Activated CD4-positive, alpha-beta T cell treated with anti-CD3 and anti-CD28 coated beads for 36 hours (primary cell): ENCODE measurements at regions of chr10 and their contacts with region 1.

Region 1: GRCh38 chr10:14959276-14960057 is at the start of gene MEIG1:
- DNase-seq: peak; percentile 96
- ATAC-seq: peak; percentile 87
- H3K4me3 Mint-ChIP-seq: peak within 1 kb of the TSS; percentile 97
- H3K27ac Mint-ChIP-seq: peak within 1 kb of the TSS; percentile 98
- H3K4me1 Mint-ChIP-seq: peaks cover 26% of the 10 kb centered on the region
- H3K27me3 Mint-ChIP-seq: no peaks in the 10 kb centered on the region
- total RNA-seq, gene MEIG1: 0.81 to 1.1 TPM

Region 2: GRCh38 chr10:14491806-14492205 is 467.7 kb before region 1 on chr10:
- CTCF ChIA-PET with region 1: no interaction called
- POLR2A ChIA-PET with region 1: no interaction called
- intact Hi-C with region 1: loop called in 1 of 2 experiments (anchors 10 kb)
- DNase-seq: no peak
- ATAC-seq: no peak
- H3K4me3 Mint-ChIP-seq: no peak overlapping the region
- H3K27ac Mint-ChIP-seq: peak overlapping the region; percentile 13
- H3K4me1 Mint-ChIP-seq: peaks cover 2% of the 10 kb centered on the region
- H3K27me3 Mint-ChIP-seq: peaks cover 2% of the 10 kb centered on the region

Region 3: DNA sequence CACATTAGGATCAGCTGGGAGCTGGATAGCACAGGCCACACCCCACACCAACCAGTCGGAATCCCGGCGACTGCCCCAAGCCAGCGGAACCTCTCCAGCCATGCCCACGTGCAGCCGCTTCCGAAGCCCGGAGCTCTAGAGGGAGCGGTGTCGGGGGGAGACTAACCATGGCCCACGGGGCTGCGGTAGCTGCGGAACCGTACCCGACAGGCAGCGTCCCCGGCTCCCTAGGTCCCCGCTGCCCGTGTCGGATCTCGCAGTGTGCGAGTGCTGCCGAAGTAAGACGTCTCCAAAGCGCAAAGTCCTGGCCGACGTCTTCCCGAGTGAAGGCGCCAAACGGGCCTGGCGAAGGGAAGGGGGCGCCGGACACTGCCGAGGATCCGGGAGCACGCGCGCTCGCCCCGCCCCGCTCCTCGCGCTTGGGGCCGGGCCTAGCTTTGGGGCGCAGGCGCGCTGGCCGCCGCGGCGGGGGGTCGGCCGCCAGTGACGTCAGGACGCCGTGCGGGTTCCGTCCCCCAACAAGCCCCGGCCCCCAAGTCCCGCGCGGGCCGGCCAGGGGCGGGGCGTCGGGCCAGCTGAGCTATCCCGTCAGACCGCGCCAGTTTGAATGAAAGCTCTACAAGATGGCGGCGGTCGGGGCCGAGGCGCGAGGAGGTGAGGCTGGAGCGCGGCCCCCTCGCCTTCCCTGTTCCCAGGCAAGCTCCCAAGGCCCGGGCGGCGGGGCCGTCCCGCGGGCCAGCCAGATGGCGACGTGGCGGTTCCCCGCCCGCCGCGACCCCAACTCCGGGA is 81.0 kb before region 1 on chr10 and contains the start of gene SUV39H2:
- CTCF ChIA-PET with region 1: interaction called, 3 read pairs
- POLR2A ChIA-PET with region 1: interaction called, 8 read pairs
- intact Hi-C with region 1: loop called (anchors 1 kb)
- DNase-seq: peak; percentile 97
- ATAC-seq: peak; percentile 92
- H3K4me3 Mint-ChIP-seq: peak within 1 kb of the TSS; percentile 97
- H3K27ac Mint-ChIP-seq: peak within 1 kb of the TSS; percentile 93
- H3K4me1 Mint-ChIP-seq: peaks cover 37% of the 10 kb centered on the region
- H3K27me3 Mint-ChIP-seq: no peaks in the 10 kb centered on the region
- total RNA-seq, gene SUV39H2: 42.9 to 51.5 TPM

Region 4: GRCh38 chr10:15097011-15097812 is 137.7 kb after region 1 on chr10 and contains the start of gene RPP38:
- CTCF ChIA-PET with region 1: interaction called, 3 read pairs
- POLR2A ChIA-PET with region 1: no interaction called
- intact Hi-C with region 1: loop called (anchors 1 to 5 kb)
- DNase-seq: peak; percentile 97
- ATAC-seq: peak; percentile 95
- H3K4me3 Mint-ChIP-seq: peak within 1 kb of the TSS; percentile 87
- H3K27ac Mint-ChIP-seq: peak within 1 kb of the TSS; percentile 97
- H3K4me1 Mint-ChIP-seq: peaks cover 22% of the 10 kb centered on the region
- H3K27me3 Mint-ChIP-seq: no peaks in the 10 kb centered on the region
- total RNA-seq, gene RPP38: 26.1 to 27.1 TPM

Region 5: DNA sequence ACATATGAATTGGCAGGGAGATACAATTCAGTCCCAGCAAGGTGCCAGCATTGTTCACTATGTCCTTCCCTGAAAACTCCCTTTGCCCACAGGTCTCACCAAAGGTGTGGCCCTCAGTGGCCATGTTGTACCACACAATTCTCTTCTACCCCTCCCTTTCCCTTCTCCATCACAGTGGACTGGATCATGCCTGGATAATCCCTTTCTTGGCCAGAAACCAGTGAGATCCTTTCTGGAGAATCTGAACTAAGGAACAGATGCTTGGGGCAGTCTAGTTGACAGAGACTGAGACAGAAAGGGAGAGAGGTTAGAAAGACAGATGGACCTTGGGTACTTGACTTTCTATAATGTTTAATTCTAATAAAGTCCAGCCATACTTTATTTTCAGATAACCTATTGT is 199.5 kb after region 1 on chr10:
- CTCF ChIA-PET with region 1: no interaction called
- POLR2A ChIA-PET with region 1: no interaction called
- intact Hi-C with region 1: no loop called
- DNase-seq: no peak
- ATAC-seq: no peak
- H3K4me3 Mint-ChIP-seq: no peak overlapping the region
- H3K27ac Mint-ChIP-seq: no peak overlapping the region
- H3K4me1 Mint-ChIP-seq: peaks cover 49% of the 10 kb centered on the region
- H3K27me3 Mint-ChIP-seq: no peaks in the 10 kb centered on the region

Region 6: DNA sequence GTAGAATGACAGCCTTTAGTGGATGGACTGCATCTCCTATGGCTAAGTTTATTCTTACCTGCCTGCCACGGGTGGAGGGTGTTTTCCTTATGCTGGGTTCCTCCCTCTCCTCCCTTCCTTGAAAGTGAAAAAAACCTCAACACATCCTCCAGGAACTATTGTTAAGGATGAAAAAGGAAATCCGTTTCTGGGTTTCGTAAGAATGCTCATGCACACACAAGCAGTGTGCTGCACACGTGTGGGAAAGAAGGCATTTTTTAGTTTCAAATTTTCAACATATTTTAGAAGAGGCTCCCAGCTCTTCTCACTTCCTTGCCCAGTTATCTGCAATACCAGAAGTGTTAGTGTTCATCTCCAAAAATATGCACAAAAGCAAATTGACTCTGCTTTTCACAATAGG is 321.0 kb after region 1 on chr10:
- CTCF ChIA-PET with region 1: no interaction called
- POLR2A ChIA-PET with region 1: no interaction called
- intact Hi-C with region 1: no loop called
- DNase-seq: no peak
- ATAC-seq: no peak
- H3K4me3 Mint-ChIP-seq: no peak overlapping the region
- H3K27ac Mint-ChIP-seq: no peak overlapping the region
- H3K4me1 Mint-ChIP-seq: no peaks in the 10 kb centered on the region
- H3K27me3 Mint-ChIP-seq: no peaks in the 10 kb centered on the region